Mammary epithelial cell (primary cell): ENCODE measurements at regions of chr5 and their contacts with region 1.

Region 1: DNA sequence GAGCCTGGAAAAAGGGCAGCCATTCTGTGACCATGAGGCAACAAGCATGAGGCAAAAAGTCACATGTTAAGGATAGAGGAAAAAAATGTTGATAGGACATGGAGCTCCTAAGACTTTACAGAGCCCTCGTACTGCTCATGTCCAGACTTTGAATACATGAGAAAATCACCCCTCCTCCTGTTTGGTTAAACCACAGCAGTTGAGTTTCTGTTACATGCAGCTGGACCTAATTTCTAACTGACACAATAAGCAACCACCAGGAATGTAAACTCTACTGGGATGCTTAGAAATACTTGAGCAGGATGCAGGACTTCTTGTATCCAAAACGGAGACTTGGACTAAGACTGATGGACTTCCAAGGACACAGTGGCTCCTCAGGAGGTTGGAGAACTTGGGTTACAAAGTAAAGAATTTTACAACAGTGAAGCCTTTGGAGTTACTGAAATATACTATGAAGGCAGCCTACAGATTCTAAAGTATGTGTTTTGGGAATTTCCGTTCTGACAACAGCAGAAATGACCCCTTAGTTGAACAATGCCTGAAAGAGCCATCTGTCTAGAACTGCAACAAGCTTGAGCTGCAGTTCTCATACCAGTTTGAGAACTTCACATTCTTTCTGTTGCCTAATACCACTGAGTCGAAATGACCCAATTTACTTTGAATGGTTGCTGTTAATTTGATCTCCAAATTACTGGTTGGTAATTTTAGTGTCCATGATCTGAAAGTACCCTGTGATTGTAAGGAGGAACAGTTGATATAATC is 268.9 kb downstream of the PIK3R1 start:
- DNase-seq: peak; percentile 31
- H3K4me3 ChIP-seq: no peak overlapping the region
- H3K27ac ChIP-seq: no peak overlapping the region
- H3K4me1 ChIP-seq: no peaks in the 10 kb centered on the region
- H3K27me3 ChIP-seq: no peaks in the 10 kb centered on the region
- CTCF ChIP-seq: no peak

Region 2: GRCh38 chr5:68538814-68539420 is 54.4 kb after region 1 on chr5:
- CTCF ChIA-PET with region 1: no interaction called
- dilution Hi-C with region 1: loop called (anchors 5 kb)
- in situ Hi-C with region 1: no loop called
- intact Hi-C with region 1: no loop called
- DNase-seq: no peak
- H3K4me3 ChIP-seq: no peak overlapping the region
- H3K27ac ChIP-seq: no peak overlapping the region
- H3K4me1 ChIP-seq: peaks cover 2% of the 10 kb centered on the region
- H3K27me3 ChIP-seq: no peaks in the 10 kb centered on the region
- CTCF ChIP-seq: no peak